Natural killer cell (primary cell): ENCODE measurements at regions of chr6 and their contacts with region 1.

Region 1: GRCh38 chr6:30556066-30556905 is at the start of gene GNL1:
- DNase-seq: peak; percentile 97 to 99
- ATAC-seq: peak; percentile 79 to 93 (median 80)
- H3K4me3 ChIP-seq: peak within 1 kb of the TSS; percentile 64
- H3K4me3 Mint-ChIP-seq: peak within 1 kb of the TSS; percentile 98
- H3K27ac ChIP-seq: peak within 1 kb of the TSS; percentile 97
- H3K27ac Mint-ChIP-seq: peak within 1 kb of the TSS; percentile 98 to 100
- H3K4me1 ChIP-seq: peaks cover 24% of the 10 kb centered on the region
- H3K4me1 Mint-ChIP-seq: peaks cover 35 to 54% of the 10 kb centered on the region in 2 donors
- H3K27me3 ChIP-seq: no peaks in the 10 kb centered on the region
- H3K27me3 Mint-ChIP-seq: no peaks in the 10 kb centered on the region
- CTCF ChIP-seq: no peak
- total RNA-seq, gene GNL1: 137 to 208 (median 187) TPM

Region 2: DNA sequence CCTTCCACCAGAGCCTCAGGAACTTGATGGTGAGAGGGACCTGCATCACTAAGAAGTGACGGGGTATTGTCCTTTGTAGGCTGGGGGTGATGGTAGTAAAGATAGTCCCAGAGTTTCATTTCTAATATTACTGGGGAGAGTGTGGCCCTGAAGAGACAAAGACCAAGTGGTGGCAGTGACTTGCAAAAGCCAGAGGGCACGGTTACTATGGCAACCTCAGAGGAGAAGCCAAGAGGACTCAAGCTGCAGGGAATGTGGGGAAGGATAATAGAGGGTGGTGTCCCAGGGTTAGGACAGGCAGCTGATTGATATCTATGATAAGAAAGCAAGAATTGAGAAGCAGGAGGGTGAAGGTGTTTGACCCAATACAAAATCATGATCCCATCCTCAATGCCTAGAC is 686.2 kb before region 1 on chr6:
- intact Hi-C with region 1: no loop called
- DNase-seq: no peak
- ATAC-seq: no peak
- H3K4me3 ChIP-seq: no peak overlapping the region
- H3K4me3 Mint-ChIP-seq: no peak overlapping the region
- H3K27ac ChIP-seq: no peak overlapping the region
- H3K27ac Mint-ChIP-seq: no peak overlapping the region
- H3K4me1 ChIP-seq: no peaks in the 10 kb centered on the region
- H3K4me1 Mint-ChIP-seq: no peaks in the 10 kb centered on the region
- H3K27me3 ChIP-seq: peaks cover 5% of the 10 kb centered on the region
- H3K27me3 Mint-ChIP-seq: peaks cover 22 to 33% of the 10 kb centered on the region in 2 donors
- CTCF ChIP-seq: no peak

Region 3: DNA sequence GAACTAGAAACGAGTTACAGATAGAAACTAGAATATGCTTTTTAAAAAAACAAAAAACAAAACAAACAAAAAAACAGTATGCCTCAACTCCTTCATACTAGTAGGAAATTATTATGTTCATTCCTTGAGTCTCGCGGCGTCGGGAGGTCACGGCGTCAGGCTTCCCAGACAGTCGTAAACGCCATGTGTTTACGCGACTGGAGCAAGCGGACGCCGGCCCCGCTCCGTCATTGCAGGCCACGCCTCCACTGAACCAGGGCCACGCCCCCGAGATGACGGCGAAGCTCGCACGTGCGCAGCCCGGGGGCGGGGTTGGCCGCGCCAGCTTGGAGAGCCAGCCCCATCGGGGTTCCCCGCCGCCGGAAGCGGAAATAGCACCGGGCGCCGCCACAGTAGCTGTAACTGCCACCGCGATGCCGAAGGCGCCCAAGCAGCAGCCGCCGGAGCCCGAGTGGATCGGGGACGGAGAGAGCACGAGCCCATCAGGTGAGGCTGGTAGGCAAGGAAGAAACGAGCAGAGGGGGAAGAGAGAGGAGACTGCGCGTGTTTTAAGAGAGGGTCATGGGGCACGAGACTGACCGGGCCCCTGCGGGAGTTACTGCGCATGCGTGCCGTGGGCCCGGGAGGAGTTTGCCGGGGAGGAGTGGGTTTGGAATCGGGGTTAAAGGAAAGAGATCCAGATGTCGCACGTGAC is 14.9 kb after region 1 on chr6 and contains the start of gene ABCF1:
- intact Hi-C with region 1: loop called (anchors 1 kb)
- DNase-seq: peak; percentile 100
- ATAC-seq: peak; percentile 93 to 100 (median 94)
- H3K4me3 ChIP-seq: peak within 1 kb of the TSS; percentile 72
- H3K4me3 Mint-ChIP-seq: peak within 1 kb of the TSS; percentile 95
- H3K27ac ChIP-seq: peak within 1 kb of the TSS; percentile 87
- H3K27ac Mint-ChIP-seq: peak within 1 kb of the TSS; percentile 98 to 99
- H3K4me1 ChIP-seq: peaks cover 19% of the 10 kb centered on the region
- H3K4me1 Mint-ChIP-seq: peaks cover 51 to 52% of the 10 kb centered on the region in 2 donors
- H3K27me3 ChIP-seq: no peaks in the 10 kb centered on the region
- H3K27me3 Mint-ChIP-seq: no peaks in the 10 kb centered on the region
- CTCF ChIP-seq: no peak
- total RNA-seq, gene ABCF1: 91.4 to 138 (median 138) TPM